MCF 10A (cell line): ENCODE measurements at regions of chr16 and their contacts with region 1.

Region 1: GRCh38 chr16:67521095-67521804 is 7.4 kb upstream of the RIPOR1 start:
- DNase-seq: peak; percentile 97
- H3K4me3 Mint-ChIP-seq: peak overlapping the region; percentile 86
- H3K27ac Mint-ChIP-seq: peak overlapping the region; percentile 98
- H3K4me1 Mint-ChIP-seq: peaks cover 18% of the 10 kb centered on the region
- H3K27me3 Mint-ChIP-seq: peaks cover 19% of the 10 kb centered on the region
- CTCF ChIP-seq: peak; percentile 94

Region 2: GRCh38 chr16:67207857-67208519 is 313.3 kb before region 1 on chr16:
- CTCF ChIA-PET with region 1: no interaction called
- POLR2A ChIA-PET with region 1: no interaction called
- intact Hi-C with region 1: no loop called
- DNase-seq: peak; percentile 81
- H3K4me3 Mint-ChIP-seq: peak overlapping the region; percentile 47
- H3K27ac Mint-ChIP-seq: peak overlapping the region; percentile 66
- H3K4me1 Mint-ChIP-seq: peaks cover 32% of the 10 kb centered on the region
- H3K27me3 Mint-ChIP-seq: no peaks in the 10 kb centered on the region
- CTCF ChIP-seq: no peak

Region 3: DNA sequence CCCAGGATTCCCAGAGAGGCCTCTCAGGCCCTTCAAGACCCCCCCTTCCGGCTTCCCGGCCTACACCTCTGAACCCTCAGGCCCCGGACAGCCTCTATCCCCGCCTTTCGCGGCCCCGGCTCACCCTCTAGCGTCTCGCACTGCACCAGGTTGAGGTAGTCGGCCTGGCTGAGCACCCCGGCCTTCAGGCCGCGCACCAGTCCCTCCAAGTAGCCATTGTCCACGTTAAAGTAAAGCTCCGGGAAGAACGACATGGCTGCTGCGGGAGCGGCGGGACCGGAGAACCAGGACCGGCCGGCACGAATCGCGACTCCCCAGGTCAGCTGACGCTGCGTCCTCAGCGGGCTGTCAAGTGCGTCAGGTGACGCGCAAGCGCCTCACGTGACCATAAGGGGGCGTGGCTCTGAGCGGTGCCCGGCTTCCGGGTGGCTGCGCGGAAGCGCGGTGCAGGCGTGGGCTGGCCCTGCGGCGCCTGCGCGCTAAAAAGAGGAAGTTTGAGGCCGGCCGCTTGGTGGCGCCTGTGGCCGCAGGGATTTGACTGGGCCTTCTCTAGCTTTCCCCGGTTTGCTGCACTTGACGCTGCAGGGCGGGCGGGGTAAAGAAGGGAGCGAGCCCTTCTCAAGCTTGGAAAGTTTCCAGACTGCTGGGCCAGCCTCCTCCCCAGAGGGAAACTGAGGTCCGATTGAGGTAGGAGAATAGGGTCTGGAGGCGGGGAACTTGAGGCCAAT is 40.3 kb before region 1 on chr16 and contains the start of gene ATP6V0D1:
- CTCF ChIA-PET with region 1: interaction called, 24 read pairs
- POLR2A ChIA-PET with region 1: interaction called, 16 read pairs
- intact Hi-C with region 1: no loop called
- DNase-seq: peak; percentile 96
- H3K4me3 Mint-ChIP-seq: peak within 1 kb of the TSS; percentile 98
- H3K27ac Mint-ChIP-seq: peak within 1 kb of the TSS; percentile 97
- H3K4me1 Mint-ChIP-seq: peaks cover 22% of the 10 kb centered on the region
- H3K27me3 Mint-ChIP-seq: no peaks in the 10 kb centered on the region
- CTCF ChIP-seq: peak; percentile 79
- total RNA-seq, gene ATP6V0D1: 50.5 and 50.7 TPM in 2 replicates

Region 4: DNA sequence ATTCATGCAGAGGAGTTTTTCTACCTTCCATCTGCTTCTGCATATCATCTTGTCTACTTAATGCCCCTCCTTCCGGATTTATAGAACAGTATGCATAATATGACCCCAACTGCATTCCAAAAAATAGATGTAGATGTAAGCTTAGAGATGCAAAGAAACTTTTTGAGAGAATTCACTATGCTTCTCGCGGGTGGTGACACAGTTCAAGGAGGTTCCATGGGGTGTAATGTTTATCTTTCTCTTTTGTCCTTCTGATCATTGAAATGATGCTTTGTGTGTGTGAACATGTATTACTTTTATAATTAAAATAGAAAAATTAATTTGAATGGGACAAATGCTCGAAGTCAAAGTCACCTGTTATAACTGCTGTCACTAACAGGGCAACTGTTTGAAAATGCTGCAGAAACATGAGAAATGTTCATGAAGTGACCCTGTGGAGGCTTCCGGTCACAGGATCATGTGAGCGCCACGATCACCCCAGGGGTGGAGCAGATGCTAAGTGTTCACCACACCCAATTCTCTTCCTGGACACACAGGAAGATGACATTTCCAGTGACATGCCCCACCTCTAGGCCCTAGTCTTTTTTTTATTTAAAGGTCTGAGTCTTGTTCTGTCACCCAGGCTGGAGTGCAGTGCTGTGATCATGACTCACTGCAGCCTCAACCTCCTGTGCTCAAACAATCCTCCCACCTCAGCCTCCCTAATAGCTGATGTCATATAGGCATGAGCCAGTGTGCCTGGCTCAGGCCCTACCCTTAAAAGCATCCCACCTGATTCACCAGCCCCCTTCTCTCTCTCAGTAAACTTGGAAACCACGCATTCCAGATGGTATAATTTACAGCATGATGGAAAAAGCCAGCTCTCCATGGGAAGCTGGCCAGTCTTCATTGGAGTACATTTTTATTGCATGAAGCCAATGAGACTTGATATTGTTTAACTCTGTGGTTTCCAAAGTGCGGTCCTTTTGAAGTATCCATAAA is 16.9 kb before region 1 on chr16:
- CTCF ChIA-PET with region 1: interaction called, 65 read pairs
- POLR2A ChIA-PET with region 1: interaction called, 3 read pairs
- intact Hi-C with region 1: no loop called
- DNase-seq: no peak
- H3K4me3 Mint-ChIP-seq: no peak overlapping the region
- H3K27ac Mint-ChIP-seq: no peak overlapping the region
- H3K4me1 Mint-ChIP-seq: peaks cover 5% of the 10 kb centered on the region
- H3K27me3 Mint-ChIP-seq: no peaks in the 10 kb centered on the region
- CTCF ChIP-seq: no peak

Region 5: DNA sequence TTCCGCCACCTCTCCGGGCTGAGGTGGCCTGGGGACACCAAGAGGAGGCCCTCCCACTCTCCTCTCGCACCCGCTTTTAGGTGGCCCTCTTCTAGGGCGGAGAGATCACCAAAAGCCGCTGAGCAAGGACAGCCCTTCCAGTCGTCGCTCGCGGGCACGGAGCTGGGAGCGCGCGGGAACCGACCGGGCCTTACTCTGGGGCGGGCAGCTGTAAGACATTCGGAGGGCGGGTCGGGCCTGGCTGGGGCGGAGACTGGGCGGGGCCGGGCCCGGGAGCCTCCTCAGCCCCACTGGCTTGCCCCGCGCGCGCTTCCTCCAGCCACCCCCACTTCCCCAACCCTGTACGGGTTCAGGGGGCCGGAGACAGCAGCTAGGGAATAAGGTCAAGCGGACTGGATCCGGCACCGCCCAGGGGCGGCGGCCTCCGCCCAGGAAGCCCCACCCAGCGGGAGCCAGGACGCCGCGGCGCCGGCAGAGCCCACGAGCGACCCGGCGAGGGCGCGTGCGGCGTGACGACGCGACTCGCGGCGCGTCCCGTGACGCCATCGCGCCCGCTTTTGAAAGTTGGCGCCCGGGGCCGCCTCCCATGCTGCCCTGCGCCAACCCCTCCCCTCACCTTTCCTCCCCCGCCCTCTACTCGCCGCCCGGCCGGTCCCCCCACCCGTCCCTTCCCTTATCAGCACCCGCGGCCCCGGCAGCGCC is 40.7 kb after region 1 on chr16:
- CTCF ChIA-PET with region 1: interaction called, 35 read pairs
- POLR2A ChIA-PET with region 1: interaction called, 9 read pairs
- intact Hi-C with region 1: loop called (anchors 2 kb)
- DNase-seq: peak; percentile 96
- H3K4me3 Mint-ChIP-seq: peak overlapping the region; percentile 88
- H3K27ac Mint-ChIP-seq: peak overlapping the region; percentile 81
- H3K4me1 Mint-ChIP-seq: peaks cover 7% of the 10 kb centered on the region
- H3K27me3 Mint-ChIP-seq: no peaks in the 10 kb centered on the region
- CTCF ChIP-seq: no peak

Region 6: DNA sequence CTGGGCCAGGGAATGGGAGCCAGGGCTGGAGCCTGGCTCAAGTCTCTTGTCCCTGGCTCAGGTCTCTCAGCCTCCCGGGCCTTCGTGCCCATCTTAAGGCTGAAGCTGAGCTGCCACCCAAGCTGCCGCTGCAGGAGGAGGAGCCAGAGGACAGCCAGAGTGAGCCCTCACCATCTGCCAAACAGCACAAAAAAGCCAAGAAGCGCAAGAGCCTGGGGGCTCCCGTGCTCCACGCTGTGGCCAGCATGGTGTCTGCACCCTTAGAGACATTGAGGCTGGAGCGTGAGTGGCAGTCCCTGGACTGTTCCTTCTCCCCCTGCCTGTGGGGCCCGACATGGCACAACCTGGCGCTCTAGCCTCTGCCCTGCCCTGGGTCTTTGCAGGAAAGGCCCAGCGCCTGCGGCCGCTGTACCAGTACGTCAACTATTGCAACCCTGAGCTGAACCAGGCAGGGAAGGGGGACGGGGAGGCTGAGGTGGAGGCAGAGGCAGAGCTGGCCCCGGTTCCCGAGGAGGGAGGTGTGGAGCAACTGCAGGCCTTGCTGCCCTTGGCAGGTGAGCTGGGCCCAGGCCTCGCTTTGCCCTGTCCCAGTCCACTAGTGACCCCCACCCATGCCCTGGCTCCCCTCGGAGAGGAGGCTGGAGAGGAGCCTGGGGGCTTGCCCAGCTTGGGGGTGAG is 146.7 kb after region 1 on chr16:
- CTCF ChIA-PET with region 1: interaction called, 57 read pairs
- POLR2A ChIA-PET with region 1: interaction called, 5 read pairs
- intact Hi-C with region 1: loop called (anchors 1 kb)
- DNase-seq: peak; percentile 82
- H3K4me3 Mint-ChIP-seq: no peak overlapping the region
- H3K27ac Mint-ChIP-seq: no peak overlapping the region
- H3K4me1 Mint-ChIP-seq: peaks cover 7% of the 10 kb centered on the region
- H3K27me3 Mint-ChIP-seq: no peaks in the 10 kb centered on the region
- CTCF ChIP-seq: peak; percentile 63

Region 7: DNA sequence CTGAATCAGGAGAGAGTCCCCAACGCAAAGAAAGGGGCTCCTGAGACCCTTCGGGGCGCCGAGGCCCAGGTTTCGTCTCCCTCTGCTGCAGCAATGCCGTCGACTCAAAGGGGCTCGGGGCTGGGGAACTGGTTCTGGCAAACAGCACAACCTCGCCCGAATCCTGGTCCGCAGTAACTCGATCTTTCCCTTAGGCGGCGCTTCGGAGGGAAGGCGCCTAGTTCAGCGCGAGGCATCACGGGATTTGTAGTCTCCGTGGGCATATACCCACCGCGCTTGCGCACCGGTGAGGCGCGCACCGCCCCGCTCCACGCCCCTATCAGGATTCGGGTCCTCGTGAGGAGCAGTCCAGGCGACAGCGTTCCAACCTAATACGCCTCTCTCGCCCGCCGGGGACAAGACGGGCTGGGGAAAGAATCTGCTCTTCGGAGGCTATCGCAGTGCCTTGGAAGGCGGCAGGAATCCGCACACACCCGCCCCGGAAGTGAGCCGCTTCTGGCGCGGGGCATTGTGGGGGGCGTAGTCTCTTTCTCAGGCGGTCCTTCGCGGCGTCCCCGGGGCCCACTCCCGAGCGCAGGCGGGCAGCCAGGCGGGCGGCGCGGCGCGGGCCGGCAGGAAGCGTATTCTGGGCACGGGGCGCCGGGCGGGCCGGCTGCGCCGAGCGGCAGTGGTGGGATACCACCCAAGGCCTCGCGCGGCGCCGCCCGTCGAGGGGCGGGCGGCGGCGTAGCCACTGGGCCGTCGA is 320.7 kb after region 1 on chr16 and contains the start of gene THAP11:
- CTCF ChIA-PET with region 1: interaction called, 5 read pairs
- POLR2A ChIA-PET with region 1: no interaction called
- intact Hi-C with region 1: loop called (anchors 10 kb)
- DNase-seq: peak; percentile 97
- H3K4me3 Mint-ChIP-seq: peak within 1 kb of the TSS; percentile 84
- H3K27ac Mint-ChIP-seq: peak within 1 kb of the TSS; percentile 86
- H3K4me1 Mint-ChIP-seq: peaks cover 16% of the 10 kb centered on the region
- H3K27me3 Mint-ChIP-seq: no peaks in the 10 kb centered on the region
- CTCF ChIP-seq: peak; percentile 85
- total RNA-seq, gene THAP11: 18.3 and 20.5 TPM in 2 replicates